ENCODE measurements at regions of chr1 and their contacts with region 1.

Region 1: GRCh38 chr1:153985941-153986761 is at the start of gene RAB13:
- DNase-seq: peak; percentile 94 to 96 (median 95)
- H3K4me3 ChIP-seq: peak within 1 kb of the TSS; percentile 86 to 96 (median 94)
- H3K27ac ChIP-seq: peak within 1 kb of the TSS; percentile 90 to 92
- H3K4me1 ChIP-seq: peaks cover 0 to 15% (median 6%) of the 10 kb centered on the region in 3 donors
- H3K27me3 ChIP-seq: no peaks in the 10 kb centered on the region
- CTCF ChIP-seq: no peak
- total RNA-seq, gene RAB13: 142 TPM

Region 2: GRCh38 chr1:153734396-153735089 is 251.6 kb before region 1 on chr1:
- intact Hi-C with region 1: no loop called
- DNase-seq: no peak
- H3K4me3 ChIP-seq: no peak overlapping the region
- H3K27ac ChIP-seq: no peak overlapping the region
- H3K4me1 ChIP-seq: peaks cover 0 to 3% (median 0%) of the 10 kb centered on the region in 3 donors
- H3K27me3 ChIP-seq: no peaks in the 10 kb centered on the region
- CTCF ChIP-seq: no peak

Region 3: DNA sequence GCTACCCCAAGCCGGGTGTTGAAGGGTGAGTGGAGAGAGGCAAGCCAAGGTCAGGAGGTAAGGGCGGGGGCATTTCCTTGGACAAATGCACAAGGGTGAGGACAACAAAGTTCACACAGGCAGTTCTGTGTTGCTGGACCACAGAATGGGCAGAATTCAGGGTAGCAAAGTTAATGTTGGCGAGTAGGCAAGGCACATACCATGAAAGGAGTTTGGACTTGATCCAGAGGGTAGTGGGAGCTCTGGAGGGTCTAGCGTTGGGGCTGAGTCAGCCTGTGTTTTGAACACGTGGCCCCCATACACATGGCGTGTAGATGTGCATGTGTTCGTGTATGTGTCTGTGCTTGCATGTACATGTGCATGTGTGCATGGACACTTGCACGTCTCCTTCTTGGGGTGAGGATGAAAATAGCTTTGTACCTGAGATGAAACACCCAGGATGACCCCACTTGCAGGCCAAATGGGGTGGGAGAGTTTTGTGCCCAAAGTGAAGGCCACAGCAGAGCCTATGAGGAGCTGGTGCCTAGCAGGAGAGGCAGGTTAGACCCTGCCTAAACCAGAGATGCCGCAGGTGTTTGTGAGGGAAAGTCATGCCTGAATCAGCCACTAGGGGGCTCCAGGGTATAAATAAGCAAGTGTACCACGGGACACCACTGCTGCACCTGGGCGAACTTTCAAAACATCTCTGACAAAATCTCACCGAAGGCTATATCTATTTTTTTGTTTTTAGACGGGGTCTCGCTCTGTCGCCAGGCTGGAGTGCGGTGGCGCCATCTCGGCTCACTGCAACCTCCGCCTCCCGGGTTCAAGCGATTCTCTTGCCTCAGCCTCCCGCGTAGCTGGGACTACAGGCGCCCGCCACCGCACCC is 189.1 kb before region 1 on chr1:
- intact Hi-C with region 1: loop called (anchors 10 kb)
- DNase-seq: peak in 4 of 5 donors; percentile 72 to 85 (median 80)
- H3K4me3 ChIP-seq: no peak overlapping the region
- H3K27ac ChIP-seq: no peak overlapping the region
- H3K4me1 ChIP-seq: peaks cover 0 to 3% (median 0%) of the 10 kb centered on the region in 3 donors
- H3K27me3 ChIP-seq: no peaks in the 10 kb centered on the region
- CTCF ChIP-seq: peak; percentile 88

Measured in kidney (tissue), 22 donors.